IMR-90 (cell line): ENCODE measurements at regions of chr4 and their contacts with region 1.

Region 1: DNA sequence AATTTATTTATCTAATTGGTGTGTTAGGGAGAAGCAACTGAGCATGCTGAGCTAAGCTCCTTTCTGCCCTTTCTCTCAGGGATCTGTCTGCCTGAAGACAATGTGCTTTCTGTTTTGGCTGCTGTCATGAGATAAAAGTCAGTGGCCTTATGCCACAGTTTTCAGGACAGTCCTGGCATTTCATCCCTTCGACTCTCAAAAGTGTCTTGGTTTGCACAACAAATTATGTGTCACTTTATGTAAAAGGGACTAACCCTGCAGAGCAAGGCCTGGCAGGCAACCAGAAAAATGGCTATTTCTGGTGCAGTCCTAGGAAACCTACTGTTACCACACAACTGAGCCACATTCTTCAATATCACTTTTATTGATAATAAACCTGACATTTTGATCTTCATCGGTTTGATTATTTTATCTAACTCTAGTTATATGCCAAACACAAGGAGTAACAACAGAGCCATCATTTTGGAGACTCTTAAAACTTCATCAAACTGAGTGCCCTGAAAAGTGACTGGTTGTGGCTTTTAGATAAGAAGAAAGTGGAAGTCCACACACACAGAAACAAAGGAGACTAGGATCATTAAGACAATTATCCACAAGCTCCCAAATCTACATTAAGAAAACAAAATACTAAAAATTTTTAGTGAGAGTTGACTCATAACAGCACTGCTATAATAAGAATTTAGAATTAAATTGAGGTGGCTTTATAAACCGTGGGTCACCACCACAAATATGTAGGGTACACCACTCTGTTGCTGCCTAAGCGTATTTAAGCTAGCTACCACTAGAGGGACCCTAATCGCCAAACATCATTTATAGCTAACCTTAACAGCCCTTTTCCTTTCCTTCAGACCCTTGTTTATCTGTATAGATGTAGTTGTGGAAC is 95.9 kb upstream of the PTPN13 start:
- DNase-seq: peak; percentile 68
- ATAC-seq: peak; percentile 94
- H3K4me3 ChIP-seq: no peak overlapping the region
- H3K27ac ChIP-seq: no peak overlapping the region
- H3K4me1 ChIP-seq: peaks cover 3% of the 10 kb centered on the region; the same call in 1 of the 2 replicates
- H3K27me3 ChIP-seq: no peaks in the 10 kb centered on the region
- CTCF ChIP-seq: peak; percentile 79
- POLR2A ChIP-seq: no peak
- RAD21 ChIP-seq: peak; percentile 71

Region 2: GRCh38 chr4:86344127-86344526 is 154.1 kb before region 1 on chr4:
- CTCF ChIA-PET with region 1: no interaction called
- POLR2A ChIA-PET with region 1: no interaction called
- dilution Hi-C with region 1: no loop called
- in situ Hi-C with region 1: no loop called
- intact Hi-C with region 1: no loop called
- DNase-seq: no peak
- ATAC-seq: no peak
- H3K4me3 ChIP-seq: no peak overlapping the region
- H3K27ac ChIP-seq: no peak overlapping the region
- H3K4me1 ChIP-seq: no peaks in the 10 kb centered on the region; the same call in 1 of the 2 replicates
- H3K27me3 ChIP-seq: no peaks in the 10 kb centered on the region
- CTCF ChIP-seq: no peak
- POLR2A ChIP-seq: no peak
- RAD21 ChIP-seq: no peak

Region 3: DNA sequence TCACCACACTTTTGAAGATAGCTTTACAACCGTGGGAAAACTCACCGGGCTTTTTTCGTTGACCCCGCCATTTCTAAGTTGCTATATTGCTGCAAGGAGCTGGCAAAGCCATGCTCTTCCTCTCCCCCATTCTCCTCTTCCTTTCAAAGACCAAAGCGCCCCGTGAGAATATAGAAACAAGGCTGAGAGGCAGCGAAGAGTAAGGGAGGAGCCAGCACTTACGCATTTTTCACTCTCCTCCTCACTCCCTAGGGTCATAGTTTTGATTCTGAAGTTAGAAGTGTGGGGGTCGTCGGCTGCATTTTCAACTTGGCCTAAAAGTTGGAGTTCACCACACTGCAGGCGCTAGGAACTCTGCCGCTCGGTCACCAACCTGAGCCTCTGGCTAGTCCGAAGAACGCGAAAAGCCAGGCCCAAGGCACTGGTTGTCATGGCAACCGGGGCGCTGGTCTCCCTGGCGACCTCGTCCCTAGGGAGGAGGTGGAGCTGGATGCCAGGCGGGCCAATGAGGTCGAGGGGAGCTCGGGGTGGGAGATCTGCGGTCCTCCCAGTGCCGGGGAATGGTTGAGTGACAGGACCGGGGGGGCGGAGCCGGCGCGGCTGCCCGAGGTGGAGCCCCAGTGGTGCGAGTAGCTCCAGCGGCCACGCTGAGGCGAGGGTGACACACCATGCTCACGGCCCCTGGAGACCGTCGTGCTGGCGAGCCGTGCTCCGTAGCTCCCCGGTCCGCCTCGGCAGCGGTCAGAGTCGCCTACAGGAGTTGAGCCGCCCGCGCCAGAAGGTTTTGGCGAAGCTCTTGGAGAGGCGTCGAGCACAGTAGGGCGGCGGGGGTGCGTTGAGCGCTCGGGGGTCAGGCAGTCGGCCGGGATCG is 95.7 kb after region 1 on chr4 and contains the start of gene PTPN13:
- CTCF ChIA-PET with region 1: interaction called, 5 read pairs
- POLR2A ChIA-PET with region 1: no interaction called
- dilution Hi-C with region 1: no loop called
- in situ Hi-C with region 1: no loop called
- intact Hi-C with region 1: loop called (anchors 2 kb)
- DNase-seq: peak; percentile 98
- ATAC-seq: peak; percentile 95
- H3K4me3 ChIP-seq: peak within 1 kb of the TSS; percentile 74
- H3K27ac ChIP-seq: peak within 1 kb of the TSS; percentile 89
- H3K4me1 ChIP-seq: peaks cover 2% of the 10 kb centered on the region
- H3K27me3 ChIP-seq: no peaks in the 10 kb centered on the region
- CTCF ChIP-seq: 0 out of 2 replicates have a peak, but pooled peaks have one; percentile 8
- POLR2A ChIP-seq: peak; percentile 86
- RAD21 ChIP-seq: no peak
- total RNA-seq, gene PTPN13: 29.0 and 31.4 TPM in 2 replicates

Region 4: GRCh38 chr4:86757468-86757867 is 259.2 kb after region 1 on chr4:
- CTCF ChIA-PET with region 1: no interaction called
- POLR2A ChIA-PET with region 1: no interaction called
- dilution Hi-C with region 1: no loop called
- in situ Hi-C with region 1: no loop called
- intact Hi-C with region 1: loop called (anchors 5 kb)
- DNase-seq: no peak
- ATAC-seq: no peak
- H3K4me3 ChIP-seq: no peak overlapping the region
- H3K27ac ChIP-seq: no peak overlapping the region
- H3K4me1 ChIP-seq: no peaks in the 10 kb centered on the region
- H3K27me3 ChIP-seq: no peaks in the 10 kb centered on the region
- CTCF ChIP-seq: no peak
- POLR2A ChIP-seq: no peak
- RAD21 ChIP-seq: no peak

Region 5: GRCh38 chr4:86895692-86896488 is 397.7 kb after region 1 on chr4:
- CTCF ChIA-PET with region 1: interaction called, 7 read pairs
- POLR2A ChIA-PET with region 1: no interaction called
- dilution Hi-C with region 1: no loop called
- in situ Hi-C with region 1: loop called (anchors 5 kb)
- intact Hi-C with region 1: loop called (anchors 1 kb)
- DNase-seq: peak; percentile 77
- ATAC-seq: peak; percentile 38
- H3K4me3 ChIP-seq: no peak overlapping the region
- H3K27ac ChIP-seq: no peak overlapping the region
- H3K4me1 ChIP-seq: peaks cover 5% of the 10 kb centered on the region
- H3K27me3 ChIP-seq: no peaks in the 10 kb centered on the region
- CTCF ChIP-seq: peak; percentile 84
- POLR2A ChIP-seq: no peak
- RAD21 ChIP-seq: peak; percentile 87

Region 6: DNA sequence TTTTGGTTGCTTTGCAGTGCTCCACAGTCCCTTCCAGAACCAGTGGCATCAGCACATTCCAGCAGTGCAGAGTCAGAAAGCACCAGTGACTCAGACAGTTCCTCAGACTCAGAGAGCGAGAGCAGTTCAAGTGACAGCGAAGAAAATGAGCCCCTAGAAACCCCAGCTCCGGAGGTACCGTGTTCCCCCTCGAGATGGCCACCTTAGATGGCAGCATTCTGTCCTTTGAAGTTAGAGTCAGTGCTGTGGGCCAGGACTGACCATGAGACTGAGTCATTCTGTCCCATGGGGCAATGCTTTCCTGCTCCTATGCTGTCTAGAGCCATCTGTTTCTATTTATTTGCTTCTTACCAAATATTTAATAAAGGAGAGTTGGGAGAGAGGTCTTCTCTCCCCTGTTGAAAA is 609.9 kb after region 1 on chr4:
- CTCF ChIA-PET with region 1: no interaction called
- POLR2A ChIA-PET with region 1: no interaction called
- dilution Hi-C with region 1: no loop called
- in situ Hi-C with region 1: loop called (anchors 25 kb)
- intact Hi-C with region 1: no loop called
- DNase-seq: peak; percentile 85
- ATAC-seq: peak; percentile 91
- H3K4me3 ChIP-seq: no peak overlapping the region
- H3K27ac ChIP-seq: peak overlapping the region; percentile 51
- H3K4me1 ChIP-seq: peaks cover 9% of the 10 kb centered on the region
- H3K27me3 ChIP-seq: no peaks in the 10 kb centered on the region
- CTCF ChIP-seq: no peak
- POLR2A ChIP-seq: no peak
- RAD21 ChIP-seq: 0 out of 2 replicates have a peak, but pooled peaks have one; percentile 8